ENCODE measurements at regions of chr5 and their contacts with region 1.

Region 1: GRCh38 chr5:151825445-151825844 is 53.7 kb downstream of the G3BP1 start:
- DNase-seq: peak in 6 of 9 donors; percentile 2 to 37 (median 22)
- ATAC-seq: peak; percentile 63
- H3K4me3 ChIP-seq: no peak overlapping the region
- H3K4me3 Mint-ChIP-seq: no peak overlapping the region
- H3K27ac ChIP-seq: no peak overlapping the region
- H3K27ac Mint-ChIP-seq: no peak overlapping the region
- H3K4me1 ChIP-seq: no peaks in the 10 kb centered on the region
- H3K4me1 Mint-ChIP-seq: peaks cover 2 to 11% (median 6%) of the 10 kb centered on the region in 7 donors
- H3K27me3 ChIP-seq: no peaks in the 10 kb centered on the region
- H3K27me3 Mint-ChIP-seq: no peaks in the 10 kb centered on the region

Region 2: GRCh38 chr5:152271420-152271819 is 446.0 kb after region 1 on chr5:
- CTCF ChIA-PET with region 1: no interaction called
- POLR2A ChIA-PET with region 1: no interaction called
- intact Hi-C with region 1: loop called (anchors 1 to 10 kb)
- DNase-seq: no peak
- ATAC-seq: no peak
- H3K4me3 ChIP-seq: no peak overlapping the region
- H3K4me3 Mint-ChIP-seq: no peak overlapping the region
- H3K27ac ChIP-seq: no peak overlapping the region
- H3K27ac Mint-ChIP-seq: no peak overlapping the region
- H3K4me1 ChIP-seq: no peaks in the 10 kb centered on the region
- H3K4me1 Mint-ChIP-seq: no peaks in the 10 kb centered on the region
- H3K27me3 ChIP-seq: no peaks in the 10 kb centered on the region
- H3K27me3 Mint-ChIP-seq: peaks cover 0 to 8% (median 0%) of the 10 kb centered on the region in 5 donors

Region 3: GRCh38 chr5:152349683-152350526 is 524.5 kb after region 1 on chr5:
- CTCF ChIA-PET with region 1: interaction called, 20 read pairs
- POLR2A ChIA-PET with region 1: no interaction called
- intact Hi-C with region 1: loop called in 1 of 2 experiments (anchors 5 kb)
- DNase-seq: no peak
- ATAC-seq: no peak
- H3K4me3 ChIP-seq: no peak overlapping the region
- H3K4me3 Mint-ChIP-seq: no peak overlapping the region
- H3K27ac ChIP-seq: no peak overlapping the region
- H3K27ac Mint-ChIP-seq: no peak overlapping the region
- H3K4me1 ChIP-seq: no peaks in the 10 kb centered on the region
- H3K4me1 Mint-ChIP-seq: no peaks in the 10 kb centered on the region
- H3K27me3 ChIP-seq: no peaks in the 10 kb centered on the region
- H3K27me3 Mint-ChIP-seq: peaks cover 3 to 13% (median 6%) of the 10 kb centered on the region in 5 donors

Region 4: DNA sequence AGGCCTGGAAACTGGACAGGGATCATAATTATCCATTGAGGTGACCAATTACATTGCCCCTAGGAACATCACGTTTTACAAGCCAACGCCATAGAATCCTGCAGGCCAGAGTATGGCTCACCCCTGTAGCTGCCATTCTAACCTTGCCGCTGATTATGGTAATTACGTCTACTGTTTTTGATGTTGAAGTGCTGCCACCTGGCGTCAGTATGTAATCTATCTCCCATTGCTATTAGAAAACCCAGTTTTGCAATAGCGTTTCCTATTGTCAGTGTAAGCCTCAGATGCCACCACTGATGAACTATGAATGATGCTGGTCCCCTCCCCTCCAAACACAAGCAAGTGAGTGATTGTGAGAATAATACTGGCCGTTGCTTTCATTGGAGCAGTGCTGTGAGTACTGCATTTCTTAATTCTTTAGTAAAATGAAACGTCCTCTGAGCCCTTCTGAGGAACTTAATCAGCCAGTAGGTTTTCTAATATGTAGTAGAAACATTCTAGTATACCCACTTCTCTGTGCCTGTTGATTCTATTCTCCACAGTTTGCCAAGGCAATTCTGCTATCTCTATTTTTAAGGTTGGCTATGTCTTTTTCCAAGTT is 680.1 kb after region 1 on chr5:
- CTCF ChIA-PET with region 1: no interaction called
- POLR2A ChIA-PET with region 1: interaction called, 3 read pairs
- intact Hi-C with region 1: loop called (anchors 1 kb)
- DNase-seq: peak in 5 of 9 donors; percentile 4 to 30 (median 8)
- ATAC-seq: peak; percentile 72
- H3K4me3 ChIP-seq: no peak overlapping the region
- H3K4me3 Mint-ChIP-seq: no peak overlapping the region
- H3K27ac ChIP-seq: no peak overlapping the region
- H3K27ac Mint-ChIP-seq: no peak overlapping the region
- H3K4me1 ChIP-seq: no peaks in the 10 kb centered on the region
- H3K4me1 Mint-ChIP-seq: peaks cover 0 to 3% (median 0%) of the 10 kb centered on the region in 7 donors
- H3K27me3 ChIP-seq: no peaks in the 10 kb centered on the region
- H3K27me3 Mint-ChIP-seq: peaks cover 10 to 28% (median 21%) of the 10 kb centered on the region in 5 donors

Region 5: GRCh38 chr5:152514827-152515397 is 689.5 kb after region 1 on chr5:
- CTCF ChIA-PET with region 1: no interaction called
- POLR2A ChIA-PET with region 1: no interaction called
- intact Hi-C with region 1: loop called in 1 of 2 experiments (anchors 2 kb)
- DNase-seq: no peak
- ATAC-seq: no peak
- H3K4me3 ChIP-seq: no peak overlapping the region
- H3K4me3 Mint-ChIP-seq: no peak overlapping the region
- H3K27ac ChIP-seq: no peak overlapping the region
- H3K27ac Mint-ChIP-seq: no peak overlapping the region
- H3K4me1 ChIP-seq: no peaks in the 10 kb centered on the region
- H3K4me1 Mint-ChIP-seq: peaks cover 0 to 2% (median 0%) of the 10 kb centered on the region in 7 donors
- H3K27me3 ChIP-seq: no peaks in the 10 kb centered on the region
- H3K27me3 Mint-ChIP-seq: peaks cover 10 to 27% (median 20%) of the 10 kb centered on the region in 5 donors